MCF 10A (cell line): ENCODE measurements at regions of chr11 and their contacts with region 1.

Region 1: DNA sequence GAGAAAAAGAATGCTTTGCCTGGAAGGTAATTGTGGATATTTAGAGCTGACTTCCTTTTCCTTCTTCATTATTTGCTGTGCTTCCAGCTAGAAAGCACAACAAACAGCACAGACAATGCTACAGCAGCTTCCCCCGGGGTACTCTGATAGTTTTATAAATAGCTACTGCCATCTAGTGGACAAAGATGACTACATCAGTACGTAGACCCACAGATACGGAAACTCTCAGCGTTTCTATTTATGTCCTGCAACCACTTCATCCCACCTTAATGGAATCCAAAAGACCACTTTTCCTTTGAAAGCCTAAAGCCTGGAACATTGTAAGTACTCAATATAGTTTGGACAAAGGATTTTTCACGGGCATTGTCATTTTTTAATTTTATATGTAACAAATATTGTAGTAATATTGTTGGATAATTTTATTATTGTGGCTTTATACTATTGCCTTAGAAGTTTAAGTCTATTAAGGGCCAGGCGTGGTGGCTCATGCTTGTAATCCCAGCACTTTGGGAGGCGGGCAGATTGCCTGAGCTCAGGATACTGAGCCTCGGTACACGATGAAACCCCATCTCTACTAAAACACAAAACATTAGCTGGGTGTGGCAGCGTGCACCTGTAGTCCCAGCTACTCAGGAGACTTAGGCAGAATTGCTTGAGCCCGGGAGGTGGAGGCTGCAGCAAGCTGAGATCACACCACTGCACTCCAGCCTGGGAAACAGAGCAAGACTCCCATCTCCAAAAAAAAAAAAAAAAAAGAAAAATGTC is 7.5 kb downstream of the HSPA8 start:
- DNase-seq: peak; percentile 72
- H3K4me3 Mint-ChIP-seq: no peak overlapping the region
- H3K27ac Mint-ChIP-seq: no peak overlapping the region
- H3K4me1 Mint-ChIP-seq: peaks cover 27% of the 10 kb centered on the region
- H3K27me3 Mint-ChIP-seq: no peaks in the 10 kb centered on the region
- CTCF ChIP-seq: peak; percentile 59

Region 2: GRCh38 chr11:122869622-122870021 is 184.9 kb before region 1 on chr11:
- CTCF ChIA-PET with region 1: interaction called, 104 read pairs
- POLR2A ChIA-PET with region 1: interaction called, 10 read pairs
- intact Hi-C with region 1: no loop called
- DNase-seq: peak; percentile 38
- H3K4me3 Mint-ChIP-seq: no peak overlapping the region
- H3K27ac Mint-ChIP-seq: no peak overlapping the region
- H3K4me1 Mint-ChIP-seq: no peaks in the 10 kb centered on the region
- H3K27me3 Mint-ChIP-seq: no peaks in the 10 kb centered on the region
- CTCF ChIP-seq: no peak

Region 3: DNA sequence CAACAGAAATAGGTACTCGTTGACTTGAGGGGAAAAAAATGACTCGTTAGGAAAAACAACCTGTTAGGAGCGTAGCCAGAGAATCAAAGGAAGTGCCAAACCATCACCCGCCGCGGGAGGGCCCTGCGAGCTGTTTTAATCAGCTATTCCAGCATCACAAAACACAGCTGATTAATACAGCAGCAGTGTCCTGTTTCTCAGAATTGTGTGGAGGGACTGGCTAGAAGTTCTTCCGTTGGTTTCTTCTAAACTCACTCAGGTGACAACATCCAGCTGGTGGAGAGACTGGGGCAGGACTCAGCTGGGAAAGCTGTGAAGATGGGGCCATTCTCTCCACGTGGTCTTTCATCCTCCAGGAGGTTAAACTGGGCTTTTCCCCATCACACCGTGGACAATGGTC is 20.6 kb before region 1 on chr11:
- CTCF ChIA-PET with region 1: interaction called, 14 read pairs
- POLR2A ChIA-PET with region 1: no interaction called
- intact Hi-C with region 1: no loop called
- DNase-seq: no peak
- H3K4me3 Mint-ChIP-seq: no peak overlapping the region
- H3K27ac Mint-ChIP-seq: no peak overlapping the region
- H3K4me1 Mint-ChIP-seq: no peaks in the 10 kb centered on the region
- H3K27me3 Mint-ChIP-seq: no peaks in the 10 kb centered on the region
- CTCF ChIP-seq: no peak